Prostate gland (tissue), 2 donors: ENCODE measurements at regions of chr10 and their contacts with region 1.

Region 1: DNA sequence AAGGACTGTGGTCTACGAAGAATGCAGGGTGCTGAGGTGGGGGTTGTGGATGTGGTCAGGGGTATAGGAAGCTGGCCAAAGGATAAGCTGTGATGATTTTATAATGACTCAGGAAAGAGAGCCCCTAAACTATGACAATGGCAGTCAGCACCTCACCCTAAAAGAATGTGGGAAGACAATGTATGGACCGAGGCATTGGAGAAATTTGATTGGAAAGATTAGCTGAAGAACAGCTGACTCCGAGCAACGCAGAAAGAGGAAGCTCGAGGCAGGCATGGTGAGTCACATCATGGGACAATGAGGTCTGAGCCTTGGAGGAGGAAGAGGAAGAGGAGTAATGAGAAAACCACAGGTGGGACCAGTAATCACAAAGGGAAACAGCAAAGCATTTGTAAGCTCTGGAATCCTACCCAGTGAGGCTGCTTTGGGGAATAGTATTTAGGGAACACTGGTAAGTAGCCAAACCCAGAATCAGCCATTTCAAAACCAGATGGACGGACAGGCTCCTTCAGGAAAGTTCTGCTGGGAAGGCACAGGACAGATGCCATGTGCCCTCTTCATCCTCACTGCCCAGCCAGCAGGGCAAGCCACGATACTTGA is 295.4 kb downstream of the PRPF18 start:
- DNase-seq: no peak
- H3K4me3 ChIP-seq: no peak overlapping the region
- H3K27ac ChIP-seq: no peak overlapping the region
- H3K4me1 ChIP-seq: no peaks in the 10 kb centered on the region
- H3K27me3 ChIP-seq: no peaks in the 10 kb centered on the region
- CTCF ChIP-seq: no peak
- POLR2A ChIP-seq: no peak

Region 2: DNA sequence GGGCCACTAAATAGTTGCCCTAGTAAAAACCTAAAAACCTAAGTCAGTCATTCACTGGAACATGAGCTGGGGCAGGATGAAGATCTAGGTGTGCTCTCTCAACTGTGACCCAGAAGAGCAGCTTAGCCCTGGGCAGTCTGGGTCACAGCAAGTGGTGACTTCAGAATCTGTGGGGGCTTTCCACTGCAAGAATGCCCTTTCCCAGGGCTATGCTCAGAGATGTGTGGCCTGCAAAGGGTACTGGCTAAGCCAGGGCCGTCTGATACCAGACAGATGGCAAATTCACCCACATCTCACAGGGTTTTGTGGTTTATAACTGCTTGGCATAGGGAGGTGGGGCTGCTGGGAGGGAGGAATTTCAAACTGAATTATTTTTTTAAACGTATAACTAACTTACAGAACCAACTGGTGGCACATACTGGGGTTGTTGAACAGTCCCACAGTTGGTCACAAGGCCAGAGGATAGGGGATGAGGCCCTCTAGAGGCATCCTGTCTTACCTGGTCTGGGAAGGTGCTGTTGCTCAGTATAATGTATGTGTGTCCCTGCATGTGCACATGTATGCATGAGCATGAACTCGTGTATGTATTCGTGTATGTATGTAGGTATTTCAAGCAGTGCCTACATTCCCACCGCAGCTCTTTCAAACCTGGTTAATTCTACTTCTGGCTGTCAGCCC is 232.2 kb before region 1 on chr10:
- intact Hi-C with region 1: no loop called
- DNase-seq: no peak
- H3K4me3 ChIP-seq: no peak overlapping the region
- H3K27ac ChIP-seq: no peak overlapping the region
- H3K4me1 ChIP-seq: no peaks in the 10 kb centered on the region
- H3K27me3 ChIP-seq: no peaks in the 10 kb centered on the region
- CTCF ChIP-seq: no peak
- POLR2A ChIP-seq: no peak

Region 3: GRCh38 chr10:13839430-13839990 is 42.7 kb before region 1 on chr10:
- intact Hi-C with region 1: loop called (anchors 5 kb)
- DNase-seq: no peak
- H3K4me3 ChIP-seq: no peak overlapping the region
- H3K27ac ChIP-seq: no peak overlapping the region
- H3K4me1 ChIP-seq: no peaks in the 10 kb centered on the region
- H3K27me3 ChIP-seq: no peaks in the 10 kb centered on the region
- CTCF ChIP-seq: no peak
- POLR2A ChIP-seq: no peak

Region 4: GRCh38 chr10:13847201-13847631 is 35.0 kb before region 1 on chr10:
- intact Hi-C with region 1: loop called (anchors 5 kb)
- DNase-seq: no peak
- H3K4me3 ChIP-seq: no peak overlapping the region
- H3K27ac ChIP-seq: peak overlapping the region in 1 of 2 donors; percentile 24
- H3K4me1 ChIP-seq: peaks cover 3% of the 10 kb centered on the region
- H3K27me3 ChIP-seq: no peaks in the 10 kb centered on the region
- CTCF ChIP-seq: no peak
- POLR2A ChIP-seq: no peak

Region 5: GRCh38 chr10:13904064-13904463 is 21.9 kb after region 1 on chr10:
- intact Hi-C with region 1: no loop called
- DNase-seq: no peak
- H3K4me3 ChIP-seq: no peak overlapping the region
- H3K27ac ChIP-seq: no peak overlapping the region
- H3K4me1 ChIP-seq: no peaks in the 10 kb centered on the region
- H3K27me3 ChIP-seq: no peaks in the 10 kb centered on the region
- CTCF ChIP-seq: no peak
- POLR2A ChIP-seq: no peak

Region 6: GRCh38 chr10:14074057-14074884 is 192.1 kb after region 1 on chr10:
- intact Hi-C with region 1: no loop called
- DNase-seq: peak; percentile 89
- H3K4me3 ChIP-seq: peak overlapping the region in 1 of 2 donors; percentile 6
- H3K27ac ChIP-seq: no peak overlapping the region
- H3K4me1 ChIP-seq: no peaks in the 10 kb centered on the region
- H3K27me3 ChIP-seq: no peaks in the 10 kb centered on the region
- CTCF ChIP-seq: no peak
- POLR2A ChIP-seq: no peak